MCF 10A (cell line): ENCODE measurements at regions of chr2 and their contacts with region 1.

Region 1: DNA sequence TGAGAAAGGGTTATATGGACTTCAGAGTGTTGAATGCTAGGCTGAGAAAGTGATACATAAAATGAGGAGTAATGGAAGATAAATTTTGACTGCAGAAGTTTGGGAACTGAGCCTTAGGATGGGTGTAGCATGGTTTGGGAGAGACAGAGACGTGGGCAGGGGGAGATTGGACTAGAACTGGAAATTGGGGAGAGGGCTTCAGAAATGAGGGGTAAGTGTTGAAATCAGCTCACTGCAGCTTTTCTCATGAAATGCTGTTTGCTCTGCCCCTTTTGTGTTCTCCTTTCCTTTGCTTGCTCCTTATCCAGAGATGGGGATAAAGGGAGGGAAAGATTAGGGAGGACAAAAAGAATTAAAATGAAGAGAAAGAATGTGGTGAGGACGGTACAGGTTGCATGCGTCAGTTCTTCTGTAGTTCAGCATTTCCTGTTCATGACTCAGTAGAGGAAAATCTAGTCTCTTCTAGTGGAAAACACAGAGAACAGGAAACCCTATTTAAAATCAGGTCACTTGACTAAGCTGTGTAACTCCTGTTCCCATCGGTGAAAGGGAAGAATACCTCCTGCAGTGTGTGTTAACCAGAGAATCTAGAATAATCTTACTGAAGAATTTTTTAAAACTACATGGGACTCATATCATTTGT is 105.6 kb downstream of the CRIM1 start:
- DNase-seq: peak; percentile 77
- H3K4me3 Mint-ChIP-seq: no peak overlapping the region
- H3K27ac Mint-ChIP-seq: no peak overlapping the region
- H3K4me1 Mint-ChIP-seq: peaks cover 7% of the 10 kb centered on the region
- H3K27me3 Mint-ChIP-seq: no peaks in the 10 kb centered on the region
- CTCF ChIP-seq: no peak

Region 2: GRCh38 chr2:36362291-36362690 is 98.9 kb before region 1 on chr2:
- CTCF ChIA-PET with region 1: interaction called, 82 read pairs
- POLR2A ChIA-PET with region 1: interaction called, 37 read pairs
- intact Hi-C with region 1: loop called (anchors 1 kb)
- DNase-seq: peak; percentile 71
- H3K4me3 Mint-ChIP-seq: peak overlapping the region; percentile 95
- H3K27ac Mint-ChIP-seq: peak overlapping the region; percentile 97
- H3K4me1 Mint-ChIP-seq: peaks cover 67% of the 10 kb centered on the region
- H3K27me3 Mint-ChIP-seq: no peaks in the 10 kb centered on the region
- CTCF ChIP-seq: no peak

Region 3: DNA sequence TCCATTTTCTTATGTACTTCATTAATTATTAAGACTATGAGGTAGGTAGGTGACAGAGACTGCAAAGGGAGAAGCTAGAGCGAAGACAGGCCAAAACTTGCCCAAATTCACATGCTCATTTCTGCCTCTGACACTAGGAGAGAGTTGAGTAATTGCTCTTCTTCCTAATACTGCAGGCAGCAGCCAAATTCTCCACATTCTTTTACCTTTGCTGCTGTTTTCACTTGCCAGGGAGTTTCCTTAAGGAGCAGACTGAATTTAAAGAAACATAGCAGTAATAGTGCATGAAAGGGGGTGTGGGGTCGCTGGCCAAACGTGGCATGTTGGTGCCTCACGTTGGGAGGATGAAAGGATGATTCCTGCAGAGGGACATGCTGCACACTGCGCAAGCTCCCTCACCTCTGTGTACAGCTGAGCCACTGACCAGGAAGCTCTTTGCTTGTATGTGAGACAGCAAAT is 93.2 kb before region 1 on chr2:
- CTCF ChIA-PET with region 1: interaction called, 82 read pairs
- POLR2A ChIA-PET with region 1: interaction called, 48 read pairs
- intact Hi-C with region 1: no loop called
- DNase-seq: peak; percentile 79
- H3K4me3 Mint-ChIP-seq: peak overlapping the region; percentile 50
- H3K27ac Mint-ChIP-seq: peak overlapping the region; percentile 87
- H3K4me1 Mint-ChIP-seq: peaks cover 82% of the 10 kb centered on the region
- H3K27me3 Mint-ChIP-seq: no peaks in the 10 kb centered on the region
- CTCF ChIP-seq: no peak

Region 4: DNA sequence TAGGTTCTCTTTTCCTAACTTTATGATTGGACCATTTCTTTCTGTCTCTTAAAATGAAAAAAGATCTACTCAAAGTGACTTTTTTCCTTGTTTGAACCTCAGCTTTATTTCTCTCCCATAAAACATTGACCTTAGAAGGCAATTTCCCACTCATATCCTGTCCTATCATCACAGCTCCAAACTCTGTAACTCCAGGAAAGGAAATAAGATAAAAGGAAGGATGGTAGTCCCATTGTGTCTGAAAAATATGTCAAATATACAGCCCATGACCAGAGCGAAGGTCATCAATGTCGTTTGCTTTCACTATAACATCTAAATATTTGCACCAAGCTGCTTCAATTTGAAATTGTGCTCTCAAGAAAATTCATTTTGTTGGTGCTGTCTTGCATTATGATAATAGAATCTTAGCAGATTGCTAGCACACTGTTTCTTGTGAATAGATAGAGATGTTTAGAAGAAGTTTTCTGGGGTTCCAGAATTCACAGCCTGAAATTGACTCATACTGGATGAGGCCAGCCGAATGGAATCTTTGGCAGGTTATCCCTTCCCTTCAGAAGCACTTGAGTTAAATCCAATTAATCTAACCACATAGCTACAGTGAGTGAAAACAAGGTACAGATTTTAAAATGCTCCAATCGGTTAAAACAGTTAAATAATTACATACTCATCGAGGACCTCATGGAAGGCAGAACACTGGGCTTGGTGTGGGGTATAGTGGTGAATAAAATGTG is 10.5 kb before region 1 on chr2:
- CTCF ChIA-PET with region 1: interaction called, 32 read pairs
- POLR2A ChIA-PET with region 1: interaction called, 17 read pairs
- intact Hi-C with region 1: no loop called
- DNase-seq: peak; percentile 59
- H3K4me3 Mint-ChIP-seq: no peak overlapping the region
- H3K27ac Mint-ChIP-seq: peak overlapping the region; percentile 5
- H3K4me1 Mint-ChIP-seq: peaks cover 37% of the 10 kb centered on the region
- H3K27me3 Mint-ChIP-seq: no peaks in the 10 kb centered on the region
- CTCF ChIP-seq: no peak

Region 5: GRCh38 chr2:36486546-36487044 is 25.4 kb after region 1 on chr2:
- CTCF ChIA-PET with region 1: interaction called, 3 read pairs
- POLR2A ChIA-PET with region 1: interaction called, 10 read pairs
- intact Hi-C with region 1: no loop called
- DNase-seq: peak; percentile 50
- H3K4me3 Mint-ChIP-seq: peak overlapping the region; percentile 20
- H3K27ac Mint-ChIP-seq: peak overlapping the region; percentile 61
- H3K4me1 Mint-ChIP-seq: peaks cover 51% of the 10 kb centered on the region
- H3K27me3 Mint-ChIP-seq: no peaks in the 10 kb centered on the region
- CTCF ChIP-seq: no peak

Region 6: GRCh38 chr2:36507408-36507812 is 46.2 kb after region 1 on chr2:
- CTCF ChIA-PET with region 1: interaction called, 6 read pairs
- POLR2A ChIA-PET with region 1: interaction called, 3 read pairs
- intact Hi-C with region 1: loop called (anchors 5 kb)
- DNase-seq: peak; percentile 82
- H3K4me3 Mint-ChIP-seq: no peak overlapping the region
- H3K27ac Mint-ChIP-seq: peak overlapping the region; percentile 12
- H3K4me1 Mint-ChIP-seq: no peaks in the 10 kb centered on the region
- H3K27me3 Mint-ChIP-seq: no peaks in the 10 kb centered on the region
- CTCF ChIP-seq: peak; percentile 84

Region 7: GRCh38 chr2:36682562-36682961 is 221.4 kb after region 1 on chr2:
- CTCF ChIA-PET with region 1: no interaction called
- POLR2A ChIA-PET with region 1: no interaction called
- intact Hi-C with region 1: no loop called
- DNase-seq: no peak
- H3K4me3 Mint-ChIP-seq: no peak overlapping the region
- H3K27ac Mint-ChIP-seq: no peak overlapping the region
- H3K4me1 Mint-ChIP-seq: no peaks in the 10 kb centered on the region
- H3K27me3 Mint-ChIP-seq: peaks cover 10% of the 10 kb centered on the region
- CTCF ChIP-seq: no peak